ENCODE measurements at regions of chr1 and their contacts with region 1.

Region 1: GRCh38 chr1:42035830-42036604 is 117.2 kb upstream of the GUCA2B start:
- DNase-seq: peak; percentile 93 to 94
- ATAC-seq: peak; percentile 94 to 95
- H3K4me3 ChIP-seq: peak overlapping the region; percentile 54 to 100 (median 79)
- H3K27ac ChIP-seq: peak overlapping the region; percentile 62 to 80 (median 76)
- H3K4me1 ChIP-seq: peaks cover 7 to 12% of the 10 kb centered on the region in 2 donors
- H3K27me3 ChIP-seq: no peaks in the 10 kb centered on the region
- CTCF ChIP-seq: no peak
- POLR2A ChIP-seq: peak; percentile 36 to 53

Region 2: GRCh38 chr1:41432481-41433280 is 603.3 kb before region 1 on chr1:
- in situ Hi-C with region 1: no loop called
- intact Hi-C with region 1: loop called (anchors 5 kb)
- DNase-seq: peak; percentile 81 to 94
- ATAC-seq: peak; percentile 91 to 96
- H3K4me3 ChIP-seq: peak overlapping the region in 2 of 4 donors; percentile 11 to 29
- H3K27ac ChIP-seq: peak overlapping the region; percentile 55 to 70 (median 67)
- H3K4me1 ChIP-seq: peaks cover 14 to 19% of the 10 kb centered on the region in 2 donors
- H3K27me3 ChIP-seq: no peaks in the 10 kb centered on the region
- CTCF ChIP-seq: peak; percentile 91 to 99 (median 97)
- POLR2A ChIP-seq: no peak

Region 3: GRCh38 chr1:41573785-41574713 is 462.0 kb before region 1 on chr1:
- in situ Hi-C with region 1: no loop called
- intact Hi-C with region 1: loop called (anchors 10 kb)
- DNase-seq: peak; percentile 48 to 71
- ATAC-seq: peak; percentile 88 to 95
- H3K4me3 ChIP-seq: no peak overlapping the region
- H3K27ac ChIP-seq: no peak overlapping the region
- H3K4me1 ChIP-seq: peaks cover 3 to 7% of the 10 kb centered on the region in 2 donors
- H3K27me3 ChIP-seq: no peaks in the 10 kb centered on the region
- CTCF ChIP-seq: peak; percentile 79 to 91 (median 84)
- POLR2A ChIP-seq: no peak

Region 4: DNA sequence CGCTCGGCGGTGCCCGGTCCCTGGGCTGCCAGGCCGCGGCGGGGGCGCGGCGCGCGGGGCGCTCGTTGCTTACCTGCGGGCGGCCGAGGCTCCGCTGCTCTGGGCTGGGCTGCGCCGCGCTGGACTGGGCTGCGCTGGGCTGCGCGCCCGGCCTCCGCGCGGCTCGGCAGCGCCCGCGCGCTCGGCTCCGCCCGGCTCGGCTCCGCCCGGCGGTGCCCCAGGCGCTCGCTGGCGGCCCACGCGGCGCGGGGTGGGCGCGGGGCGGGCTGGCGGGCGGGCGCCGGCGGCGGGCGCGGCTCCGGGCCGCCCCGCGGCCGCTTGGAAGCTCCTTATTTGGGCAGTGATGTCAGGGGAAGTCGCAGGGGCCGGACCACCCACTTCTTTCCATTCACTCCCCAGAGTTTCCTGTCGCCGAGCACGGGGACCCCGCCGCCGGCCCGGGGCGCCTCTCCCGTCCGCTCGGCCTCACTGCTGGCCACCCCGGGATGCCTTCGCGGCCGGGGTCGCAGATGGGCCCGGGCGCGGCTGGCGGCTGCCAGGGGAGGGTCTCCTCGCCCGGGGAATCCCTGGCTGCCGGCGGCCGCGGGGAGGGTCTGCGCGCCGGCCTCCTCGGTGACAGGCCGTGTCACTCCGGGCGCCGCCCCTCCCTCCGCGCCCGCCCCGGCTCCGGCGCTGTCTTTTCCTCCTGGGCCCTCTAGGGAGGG is 373.8 kb before region 1 on chr1:
- in situ Hi-C with region 1: no loop called
- intact Hi-C with region 1: loop called (anchors 5 kb)
- DNase-seq: peak in 1 of 2 donors; percentile 43
- ATAC-seq: peak; percentile 63 to 66
- H3K4me3 ChIP-seq: peak overlapping the region; percentile 60 to 74 (median 62)
- H3K27ac ChIP-seq: peak overlapping the region; percentile 80 to 88 (median 84)
- H3K4me1 ChIP-seq: peaks cover 14 to 27% of the 10 kb centered on the region in 2 donors
- H3K27me3 ChIP-seq: no peaks in the 10 kb centered on the region
- CTCF ChIP-seq: no peak
- POLR2A ChIP-seq: peak; percentile 61 to 76

Region 5: GRCh38 chr1:41902125-41902524 is 133.9 kb before region 1 on chr1:
- in situ Hi-C with region 1: no loop called
- intact Hi-C with region 1: no loop called
- DNase-seq: no peak
- ATAC-seq: no peak
- H3K4me3 ChIP-seq: no peak overlapping the region
- H3K27ac ChIP-seq: no peak overlapping the region
- H3K4me1 ChIP-seq: peaks cover 10 to 17% of the 10 kb centered on the region in 2 donors
- H3K27me3 ChIP-seq: no peaks in the 10 kb centered on the region
- CTCF ChIP-seq: no peak
- POLR2A ChIP-seq: no peak

Region 6: DNA sequence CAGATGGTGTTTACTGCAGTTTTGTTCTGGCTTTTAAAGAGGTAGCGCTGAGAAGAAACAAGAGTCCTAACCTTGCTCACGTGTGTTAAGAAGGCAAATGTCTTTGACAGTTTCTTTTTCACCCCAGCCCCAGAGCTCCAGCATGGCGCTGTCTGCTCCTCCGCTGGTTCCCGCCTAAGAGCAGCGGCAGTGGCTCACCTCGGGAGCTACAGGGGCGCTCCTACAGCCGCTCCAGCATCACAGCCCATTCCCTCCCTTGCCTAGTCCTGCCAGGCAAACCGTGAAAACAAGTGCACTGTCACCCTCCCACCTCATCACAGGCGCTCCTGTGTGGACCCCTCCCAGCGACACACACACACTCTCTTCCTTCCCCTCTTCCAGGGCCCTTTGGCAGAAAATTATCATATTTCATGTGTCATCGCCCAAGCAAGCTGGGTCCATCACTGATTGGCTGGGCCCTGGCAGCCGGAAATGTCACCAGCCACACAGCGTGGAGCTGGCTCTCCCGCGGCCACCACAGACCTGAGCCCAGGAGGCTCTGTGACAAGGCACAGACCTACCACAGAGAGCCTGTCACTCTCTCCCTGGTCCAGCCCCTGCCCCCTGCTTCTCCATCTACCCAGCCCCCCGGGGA is 116.1 kb before region 1 on chr1:
- in situ Hi-C with region 1: no loop called
- intact Hi-C with region 1: loop called (anchors 2 kb)
- DNase-seq: peak; percentile 63 to 86
- ATAC-seq: peak; percentile 74 to 79
- H3K4me3 ChIP-seq: peak overlapping the region; percentile 53 to 70 (median 55)
- H3K27ac ChIP-seq: peak overlapping the region; percentile 81 to 84 (median 83)
- H3K4me1 ChIP-seq: peaks cover 37% of the 10 kb centered on the region in 2 donors
- H3K27me3 ChIP-seq: no peaks in the 10 kb centered on the region
- CTCF ChIP-seq: no peak
- POLR2A ChIP-seq: peak; percentile 69 to 80

Region 7: DNA sequence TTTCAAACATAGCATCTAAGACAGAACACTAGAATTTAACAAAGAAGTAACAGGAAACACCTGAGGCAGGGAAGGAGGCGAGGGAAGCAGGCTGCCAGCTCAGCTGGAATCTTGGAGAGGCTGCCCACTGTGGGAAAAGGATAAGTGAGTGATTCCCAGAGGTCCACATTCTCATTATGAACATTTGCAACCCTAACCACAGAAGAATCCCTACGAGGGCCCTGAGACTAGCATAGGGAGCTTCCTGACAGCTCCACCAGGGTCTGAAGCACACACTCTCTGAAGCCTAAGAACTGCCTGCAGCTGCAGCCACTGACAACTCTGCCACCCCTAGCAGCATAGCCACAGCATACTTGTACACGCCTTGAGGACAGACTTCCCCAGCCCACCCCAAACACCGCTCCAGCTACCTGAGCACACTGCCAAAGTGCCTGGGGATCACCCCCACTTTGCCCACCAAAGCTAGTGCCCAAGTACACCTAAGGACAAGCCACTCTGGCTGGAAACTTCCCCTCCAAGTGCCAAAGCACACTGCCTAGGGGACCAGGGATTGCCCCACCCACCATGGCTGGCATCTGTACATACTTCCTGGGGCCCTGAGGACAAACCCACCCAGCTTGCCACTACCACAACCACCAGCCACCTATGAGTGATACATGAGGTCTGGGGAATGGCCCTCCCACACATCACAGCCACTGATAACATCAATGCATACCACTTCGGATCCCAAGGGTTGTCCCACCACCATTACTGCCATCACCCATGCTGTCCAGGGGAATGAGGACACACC is 205.1 kb after region 1 on chr1:
- in situ Hi-C with region 1: no loop called
- intact Hi-C with region 1: no loop called
- DNase-seq: no peak
- ATAC-seq: no peak
- H3K4me3 ChIP-seq: no peak overlapping the region
- H3K27ac ChIP-seq: no peak overlapping the region
- H3K4me1 ChIP-seq: peaks cover 18 to 32% of the 10 kb centered on the region in 2 donors
- H3K27me3 ChIP-seq: no peaks in the 10 kb centered on the region
- CTCF ChIP-seq: no peak
- POLR2A ChIP-seq: no peak

Region 8: GRCh38 chr1:42335050-42335808 is 299.2 kb after region 1 on chr1 and contains the start of gene FOXJ3:
- in situ Hi-C with region 1: no loop called
- intact Hi-C with region 1: loop called (anchors 10 kb)
- DNase-seq: peak; percentile 87 to 89
- ATAC-seq: peak; percentile 92
- H3K4me3 ChIP-seq: peak within 1 kb of the TSS; percentile 74 to 91 (median 76)
- H3K27ac ChIP-seq: peak within 1 kb of the TSS; percentile 87 to 98 (median 98)
- H3K4me1 ChIP-seq: peaks cover 31 to 34% of the 10 kb centered on the region in 2 donors
- H3K27me3 ChIP-seq: no peaks in the 10 kb centered on the region
- CTCF ChIP-seq: peak in 1 of 5 experiments; percentile 22
- POLR2A ChIP-seq: peak; percentile 82 to 86
- total RNA-seq, gene FOXJ3: 39.4 to 81.0 (median 56.3) TPM

Measured in gastrocnemius medialis (tissue), 4 donors.